ENCODE measurements at regions of chr16 and their contacts with region 1.

Region 1: DNA sequence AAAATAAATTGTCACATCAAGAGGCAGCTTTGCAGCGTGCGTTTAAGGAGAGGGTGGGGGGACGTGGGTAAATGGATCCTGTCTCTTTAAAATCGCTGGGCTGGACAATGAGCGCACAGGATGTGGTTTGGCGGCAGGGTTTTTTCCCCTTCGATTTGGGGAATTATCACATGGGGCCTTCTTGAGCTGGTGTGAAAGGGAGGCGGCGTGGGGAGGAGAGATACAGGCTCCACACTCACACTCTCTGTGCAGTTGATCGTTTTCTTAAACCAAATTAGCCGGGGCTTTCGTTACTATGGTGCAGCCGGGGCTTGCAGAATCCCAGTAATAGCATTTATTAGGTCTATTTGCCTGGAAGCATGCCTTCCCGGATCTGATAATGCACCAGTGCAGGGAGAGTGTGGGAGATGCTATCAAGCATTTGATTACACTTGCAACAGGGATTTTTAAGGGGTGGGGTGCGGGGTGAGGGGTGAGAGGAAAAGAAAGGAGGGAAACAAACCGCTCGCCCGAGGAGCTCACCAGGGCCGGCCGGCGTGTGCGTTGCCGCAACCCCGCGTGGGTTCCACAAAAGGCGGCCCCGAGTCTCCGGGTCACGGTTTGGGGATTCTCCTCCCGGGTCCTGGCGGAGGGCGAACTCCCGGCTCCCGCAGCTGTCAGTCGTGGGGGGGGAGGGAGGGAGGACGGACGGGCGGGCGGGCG is 58.9 kb upstream of the GSE1 start:
- DNase-seq: peak; percentile 47 to 96 (median 70)
- ATAC-seq: peak; percentile 58
- H3K4me3 ChIP-seq: peak overlapping the region; percentile 92
- H3K27ac ChIP-seq: peak overlapping the region; percentile 97
- H3K4me1 ChIP-seq: peaks cover 21 to 47% of the 10 kb centered on the region in 2 experiments
- H3K27me3 ChIP-seq: no peaks in the 10 kb centered on the region
- CTCF ChIP-seq: no peak
- EP300 ChIP-seq: peak; percentile 97
- POLR2A ChIP-seq: peak; percentile 88
- RAD21 ChIP-seq: peak; percentile 19 to 36; a peak in 3 of 4 replicates

Region 2: DNA sequence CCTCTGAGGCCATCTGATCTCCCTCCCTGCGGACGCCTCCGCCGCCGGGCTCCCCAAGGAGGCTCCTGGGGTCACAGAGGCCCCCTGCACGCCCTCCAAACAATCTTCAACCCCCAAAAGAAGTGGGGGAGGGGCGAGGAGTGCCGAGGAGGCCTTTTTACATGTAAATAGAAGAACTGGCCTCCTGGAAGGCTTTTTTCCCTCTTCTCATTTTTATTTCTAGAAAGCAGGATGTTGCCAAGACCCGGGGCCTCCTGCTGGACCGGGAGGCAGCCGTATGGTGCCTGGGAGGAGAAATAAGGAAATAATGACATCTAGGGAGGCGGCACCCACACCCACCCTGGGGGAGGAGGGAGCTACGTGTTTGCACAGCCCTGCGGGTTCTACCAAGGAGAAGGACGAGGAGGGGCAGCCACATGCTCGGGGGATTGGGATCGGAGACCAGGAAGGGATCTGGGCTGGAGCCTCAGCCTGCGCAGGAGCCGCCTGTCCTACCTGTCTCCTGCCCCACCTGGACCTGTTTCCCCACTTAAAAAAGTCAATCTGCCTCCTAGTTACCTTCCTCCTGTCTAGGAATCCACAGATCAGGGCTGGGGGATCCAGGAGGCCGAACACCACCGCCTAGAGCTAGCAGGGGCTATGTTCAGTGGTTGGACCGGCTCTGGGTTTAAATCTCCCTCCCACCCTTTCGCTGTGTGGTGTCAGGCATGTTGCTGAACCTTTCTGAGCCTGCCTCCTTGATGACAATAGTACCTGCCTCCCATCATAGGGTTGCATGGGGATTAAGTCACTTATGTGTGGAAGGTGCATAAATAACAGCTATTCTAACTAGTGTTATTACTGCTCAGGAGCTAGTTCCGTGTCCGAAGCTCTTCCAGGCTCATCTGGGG is 116.9 kb before region 1 on chr16:
- CTCF ChIA-PET with region 1: interaction called, 21 read pairs
- POLR2A ChIA-PET with region 1: interaction called, 7 read pairs
- in situ Hi-C with region 1: loop called (anchors 5 kb)
- intact Hi-C with region 1: loop called (anchors 1 kb)
- DNase-seq: peak; percentile 73 to 86 (median 80)
- ATAC-seq: peak; percentile 58
- H3K4me3 ChIP-seq: peak overlapping the region; percentile 7; the same call in 1 of the 2 replicates
- H3K27ac ChIP-seq: peak overlapping the region; percentile 72
- H3K4me1 ChIP-seq: peaks cover 26 to 57% of the 10 kb centered on the region in 2 experiments
- H3K27me3 ChIP-seq: no peaks in the 10 kb centered on the region
- CTCF ChIP-seq: peak in 1 of 3 experiments; percentile 4; a peak in 1 of 6 replicates
- EP300 ChIP-seq: 0 out of 2 replicates have a peak, but pooled peaks have one; percentile 1
- POLR2A ChIP-seq: no peak
- RAD21 ChIP-seq: peak in 1 of 2 experiments; percentile 10; a peak in 1 of 4 replicates

Region 3: GRCh38 chr16:85491058-85491771 is 63.0 kb before region 1 on chr16:
- CTCF ChIA-PET with region 1: interaction called, 3 read pairs
- POLR2A ChIA-PET with region 1: interaction called, 9 read pairs
- in situ Hi-C with region 1: no loop called
- intact Hi-C with region 1: loop called (anchors 2 kb)
- DNase-seq: peak; percentile 75 to 84 (median 80)
- ATAC-seq: peak; percentile 88
- H3K4me3 ChIP-seq: no peak overlapping the region
- H3K27ac ChIP-seq: peak overlapping the region; percentile 11; the same call in 1 of the 3 replicates
- H3K4me1 ChIP-seq: peaks cover 18 to 54% of the 10 kb centered on the region in 2 experiments
- H3K27me3 ChIP-seq: no peaks in the 10 kb centered on the region
- CTCF ChIP-seq: peak; percentile 96 to 99 (median 97)
- EP300 ChIP-seq: no peak
- POLR2A ChIP-seq: no peak
- RAD21 ChIP-seq: peak; percentile 78 to 85

Region 4: GRCh38 chr16:85536073-85536410 is 18.2 kb before region 1 on chr16:
- CTCF ChIA-PET with region 1: no interaction called
- POLR2A ChIA-PET with region 1: interaction called, 122 read pairs
- in situ Hi-C with region 1: no loop called
- intact Hi-C with region 1: loop called (anchors 1 kb)
- DNase-seq: peak in 2 of 4 experiments; percentile 47 to 78
- ATAC-seq: peak; percentile 30
- H3K4me3 ChIP-seq: peak overlapping the region; percentile 4; the same call in 1 of the 2 replicates
- H3K27ac ChIP-seq: peak overlapping the region; percentile 80
- H3K4me1 ChIP-seq: peaks cover 43 to 68% of the 10 kb centered on the region in 2 experiments
- H3K27me3 ChIP-seq: no peaks in the 10 kb centered on the region
- CTCF ChIP-seq: no peak
- EP300 ChIP-seq: 0 out of 2 replicates have a peak, but pooled peaks have one; percentile 4
- POLR2A ChIP-seq: no peak
- RAD21 ChIP-seq: 0 out of 4 replicates have a peak, but pooled peaks of 1 of the 2 experiments have one; percentile 2

Region 5: DNA sequence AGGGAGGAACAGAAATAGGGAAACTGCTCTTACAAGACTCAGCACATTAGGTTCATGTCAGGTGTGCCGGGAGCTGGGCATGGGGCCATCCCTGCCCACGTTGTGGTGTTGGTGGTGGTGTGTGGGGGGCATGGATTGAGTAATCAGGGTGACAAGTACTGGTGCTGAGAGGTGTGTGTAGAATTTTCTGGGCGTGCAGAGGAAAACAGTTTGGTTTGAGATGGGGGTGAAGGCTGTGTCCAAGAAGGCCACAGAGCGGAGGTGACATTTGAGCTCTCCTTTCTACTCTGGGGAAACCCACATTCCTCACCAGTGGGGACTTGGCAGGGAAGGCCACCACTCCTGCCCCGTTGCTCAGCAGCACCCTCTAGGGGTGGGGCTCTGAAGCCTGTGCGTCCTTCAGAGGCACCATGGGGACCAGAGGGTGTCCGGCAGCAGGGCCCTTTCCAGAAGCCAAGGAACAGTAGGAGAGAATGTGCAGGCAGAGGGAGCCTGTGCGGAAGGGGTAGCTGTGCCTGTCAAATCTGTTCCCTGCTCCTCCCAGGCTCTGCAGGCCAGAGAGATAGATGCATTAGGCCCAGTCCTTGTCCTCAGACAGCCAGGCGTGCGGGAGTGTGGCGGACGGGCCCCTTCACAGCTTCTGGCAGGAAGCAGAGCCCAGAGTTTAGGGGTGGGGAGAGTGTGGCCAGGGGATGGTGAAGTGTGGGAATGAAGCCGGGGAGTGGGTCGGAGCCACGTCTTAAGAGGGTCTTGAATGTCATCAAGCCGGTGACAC is 10.2 kb after region 1 on chr16:
- CTCF ChIA-PET with region 1: interaction called, 3 read pairs
- POLR2A ChIA-PET with region 1: interaction called, 57 read pairs
- in situ Hi-C with region 1: no loop called
- intact Hi-C with region 1: loop called (anchors 1 kb)
- DNase-seq: peak in 3 of 4 experiments; percentile 58 to 81 (median 74)
- ATAC-seq: peak; percentile 4
- H3K4me3 ChIP-seq: no peak overlapping the region
- H3K27ac ChIP-seq: peak overlapping the region; percentile 97
- H3K4me1 ChIP-seq: peaks cover 90 to 98% of the 10 kb centered on the region in 2 experiments
- H3K27me3 ChIP-seq: no peaks in the 10 kb centered on the region
- CTCF ChIP-seq: peak; percentile 89 to 98 (median 92)
- EP300 ChIP-seq: no peak
- POLR2A ChIP-seq: 0 out of 2 replicates have a peak, but pooled peaks have one; percentile 6
- RAD21 ChIP-seq: peak; percentile 30 to 59; a peak in 3 of 4 replicates

Region 6: DNA sequence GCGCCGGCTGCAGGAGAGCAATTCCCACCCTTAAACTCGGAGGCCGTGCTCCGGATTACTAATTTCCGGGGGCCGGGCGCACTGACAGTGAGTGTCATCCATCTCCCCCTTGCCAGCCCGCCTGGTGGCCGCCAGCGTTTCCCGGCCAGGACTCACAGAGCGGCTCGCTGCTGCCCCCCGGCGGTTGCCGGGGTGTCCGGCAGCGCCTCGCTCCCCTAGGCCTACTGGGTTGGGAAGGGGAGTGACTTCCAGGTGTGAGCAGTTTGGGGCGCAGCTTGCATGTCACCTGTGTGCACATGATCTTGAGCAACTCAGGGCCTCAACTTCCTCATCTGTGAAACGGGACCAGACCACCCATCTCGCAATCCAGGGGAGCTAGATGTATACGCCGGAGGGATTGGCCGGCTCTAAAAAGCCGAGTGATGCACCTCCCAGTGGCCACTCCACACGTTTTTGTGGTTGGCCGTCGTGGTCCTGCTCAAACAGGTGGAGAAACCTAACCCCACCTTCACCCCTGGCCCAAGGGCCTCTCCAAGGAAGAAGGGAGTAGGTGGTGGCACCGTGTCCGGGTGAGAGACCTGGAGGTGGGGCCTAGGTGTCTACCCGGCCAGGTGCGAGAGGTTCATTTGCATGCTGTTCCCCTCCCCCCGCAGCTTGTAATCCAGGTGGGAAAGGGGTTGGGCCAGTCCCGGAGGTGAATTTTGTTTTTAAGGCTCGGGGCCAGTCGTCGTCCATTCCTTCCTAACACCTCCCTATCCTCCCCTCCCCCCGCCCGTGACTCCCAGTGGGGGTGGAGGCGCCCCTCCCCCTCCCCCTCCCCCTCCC is 56.5 kb after region 1 on chr16:
- CTCF ChIA-PET with region 1: interaction called, 10 read pairs
- POLR2A ChIA-PET with region 1: interaction called, 15 read pairs
- in situ Hi-C with region 1: no loop called
- intact Hi-C with region 1: loop called (anchors 1 kb)
- DNase-seq: peak; percentile 78 to 95 (median 83)
- ATAC-seq: peak; percentile 59
- H3K4me3 ChIP-seq: peak overlapping the region; percentile 85
- H3K27ac ChIP-seq: peak overlapping the region; percentile 99
- H3K4me1 ChIP-seq: peaks cover 58 to 87% of the 10 kb centered on the region in 2 experiments
- H3K27me3 ChIP-seq: no peaks in the 10 kb centered on the region
- CTCF ChIP-seq: peak; percentile 97 to 100 (median 99)
- EP300 ChIP-seq: peak; percentile 60
- POLR2A ChIP-seq: 0 out of 2 replicates have a peak, but pooled peaks have one; percentile 20
- RAD21 ChIP-seq: peak; percentile 96 to 97

Region 7: DNA sequence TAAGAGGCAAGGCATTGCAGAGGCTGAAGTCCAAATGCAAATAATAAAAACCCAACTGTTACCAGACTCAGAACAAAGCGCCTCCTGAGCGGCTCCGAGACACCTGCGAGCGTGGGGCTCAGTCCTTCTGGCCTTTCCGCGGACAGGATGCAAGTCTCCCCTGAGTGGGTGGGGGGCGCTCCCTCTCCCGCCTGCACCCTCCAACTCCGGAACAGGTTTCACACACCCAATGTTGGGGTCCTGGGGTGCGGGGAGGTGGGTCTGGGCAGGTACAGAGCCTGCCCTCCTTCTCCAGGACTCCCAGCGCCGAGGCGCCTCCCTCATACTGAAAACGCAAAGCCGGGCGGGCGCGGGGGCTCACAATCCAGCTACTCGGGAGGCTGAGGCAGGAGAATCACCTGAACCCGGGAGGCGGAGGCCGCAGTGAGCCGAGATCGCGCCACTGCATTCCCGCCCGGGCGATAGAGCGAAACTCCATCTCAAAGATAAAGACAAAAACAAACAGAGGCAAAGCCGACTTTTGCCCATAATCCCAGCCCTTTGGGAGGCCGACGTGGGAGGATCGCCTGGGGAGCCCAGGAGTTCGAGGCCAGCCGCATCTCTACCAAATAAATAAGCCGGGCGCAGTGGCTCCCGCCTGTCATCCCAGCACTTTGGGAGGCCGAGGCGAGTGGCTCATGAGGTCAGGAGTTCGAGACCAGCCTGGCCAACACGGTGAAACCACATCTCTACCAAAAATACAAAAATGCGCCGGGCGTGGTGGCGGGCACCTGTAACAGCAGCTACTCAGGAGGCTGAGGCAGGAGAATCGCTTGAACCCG is 133.6 kb after region 1 on chr16:
- CTCF ChIA-PET with region 1: no interaction called
- POLR2A ChIA-PET with region 1: no interaction called
- in situ Hi-C with region 1: no loop called
- intact Hi-C with region 1: no loop called
- DNase-seq: peak in 2 of 4 experiments; percentile 33 to 37
- ATAC-seq: peak; percentile 17
- H3K4me3 ChIP-seq: peak overlapping the region; percentile 90
- H3K27ac ChIP-seq: peak overlapping the region; percentile 89; the same call in 2 of the 3 replicates
- H3K4me1 ChIP-seq: peaks cover 17 to 33% of the 10 kb centered on the region in 2 experiments; a peak in 4 of 5 replicates
- H3K27me3 ChIP-seq: no peaks in the 10 kb centered on the region
- CTCF ChIP-seq: peak in 1 of 3 experiments; percentile 12; a peak in 1 of 6 replicates
- EP300 ChIP-seq: no peak
- POLR2A ChIP-seq: no peak
- RAD21 ChIP-seq: no peak

Measured in K562 (cell line).